Aorta (tissue), 5 donors: ENCODE measurements at regions of chr17 and their contacts with region 1.

Region 1: DNA sequence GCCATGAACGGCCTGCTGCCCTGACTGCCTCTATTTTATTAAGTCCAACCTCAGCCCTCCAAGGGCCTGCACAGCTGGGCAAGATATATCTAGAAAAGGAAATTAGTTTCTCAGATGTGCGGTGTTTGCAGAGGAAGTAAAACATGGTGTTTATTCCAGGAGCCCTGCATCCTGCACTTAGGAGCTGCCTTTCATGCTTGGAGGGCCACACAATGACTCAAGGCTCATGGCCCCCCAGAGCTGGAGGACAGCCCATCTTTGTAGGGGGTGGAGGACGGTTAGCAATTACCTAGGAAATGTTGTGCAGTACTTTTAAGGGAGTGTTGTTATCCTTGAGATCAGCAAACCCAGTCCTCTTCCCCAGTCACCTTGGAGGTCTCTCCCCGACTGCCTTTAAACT is 80.5 kb downstream of the COPRS start:
- DNase-seq: no peak
- ATAC-seq: no peak
- H3K4me3 ChIP-seq: no peak overlapping the region
- H3K27ac ChIP-seq: no peak overlapping the region
- H3K4me1 ChIP-seq: no peaks in the 10 kb centered on the region
- H3K27me3 ChIP-seq: no peaks in the 10 kb centered on the region

Region 2: GRCh38 chr17:31824766-31825360 is 46.3 kb after region 1 on chr17:
- intact Hi-C with region 1: loop called in 1 of 2 experiments (anchors 5 kb)
- DNase-seq: no peak
- ATAC-seq: no peak
- H3K4me3 ChIP-seq: no peak overlapping the region
- H3K27ac ChIP-seq: no peak overlapping the region
- H3K4me1 ChIP-seq: peaks cover 0 to 3% of the 10 kb centered on the region in 2 donors
- H3K27me3 ChIP-seq: no peaks in the 10 kb centered on the region